ENCODE measurements at regions of chr17 and their contacts with region 1.

Region 1: DNA sequence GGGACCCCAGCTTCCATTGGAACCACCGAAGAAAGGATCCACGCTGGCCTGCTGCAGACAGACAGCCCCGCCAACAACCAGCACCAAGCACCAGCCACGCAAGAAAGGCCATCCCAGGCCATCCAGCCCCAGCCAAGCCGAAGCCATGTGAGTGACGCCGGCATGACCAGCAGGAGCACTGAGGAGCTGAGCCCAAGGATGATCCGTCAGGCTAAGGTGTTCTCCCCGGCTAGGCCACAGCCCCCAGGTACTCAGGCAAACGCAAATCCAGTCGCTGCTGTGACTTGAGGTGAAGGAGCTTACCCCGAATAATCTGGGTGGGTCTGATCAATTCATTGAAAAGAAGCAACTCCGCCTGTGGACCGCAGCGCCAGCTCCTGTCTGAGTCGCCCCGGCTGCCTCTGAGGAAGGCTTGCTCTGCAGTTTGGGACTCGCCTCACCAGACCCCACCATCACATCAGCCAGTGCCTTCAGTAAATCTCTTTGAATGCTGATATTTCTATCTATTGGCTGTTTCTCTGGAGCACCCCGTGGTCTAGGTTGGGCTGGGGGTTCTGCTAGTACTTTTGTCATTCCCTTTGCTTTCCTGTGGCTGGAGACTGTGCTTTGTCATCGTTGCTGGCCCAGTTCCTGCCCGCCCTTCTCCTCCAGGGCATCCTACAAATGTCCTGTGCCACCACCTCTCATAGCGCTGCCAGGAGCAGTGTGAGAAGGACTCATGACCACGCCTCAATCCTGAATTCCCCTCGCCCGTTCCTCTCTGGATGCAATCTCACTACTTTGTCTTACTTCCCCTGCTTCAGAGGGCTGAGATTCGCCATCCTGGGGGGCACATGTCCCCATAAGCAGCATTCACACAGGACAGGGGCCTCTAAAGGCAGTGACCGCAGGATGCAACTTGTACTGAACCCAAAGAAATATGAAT is 8.1 kb upstream of the CBX2 start:
- DNase-seq: peak; percentile 80 to 83
- H3K4me3 ChIP-seq: peak overlapping the region; percentile 95
- H3K27ac ChIP-seq: peak overlapping the region; percentile 97
- H3K4me1 ChIP-seq: peaks cover 5% of the 10 kb centered on the region
- H3K27me3 ChIP-seq: no peaks in the 10 kb centered on the region
- CTCF ChIP-seq: no peak; the same call in 1 of the 2 replicates

Region 2: GRCh38 chr17:79747508-79748295 is 22.2 kb before region 1 on chr17:
- CTCF ChIA-PET with region 1: interaction called, 3 read pairs
- POLR2A ChIA-PET with region 1: no interaction called
- intact Hi-C with region 1: loop called (anchors 2 kb)
- DNase-seq: no peak
- H3K4me3 ChIP-seq: no peak overlapping the region
- H3K27ac ChIP-seq: no peak overlapping the region
- H3K4me1 ChIP-seq: peaks cover 32% of the 10 kb centered on the region
- H3K27me3 ChIP-seq: no peaks in the 10 kb centered on the region
- CTCF ChIP-seq: no peak

Region 3: GRCh38 chr17:79785900-79786810 is 16.3 kb after region 1 on chr17:
- CTCF ChIA-PET with region 1: no interaction called
- POLR2A ChIA-PET with region 1: interaction called, 18 read pairs
- intact Hi-C with region 1: no loop called
- DNase-seq: no peak
- H3K4me3 ChIP-seq: no peak overlapping the region
- H3K27ac ChIP-seq: no peak overlapping the region
- H3K4me1 ChIP-seq: no peaks in the 10 kb centered on the region
- H3K27me3 ChIP-seq: no peaks in the 10 kb centered on the region
- CTCF ChIP-seq: no peak

Region 4: GRCh38 chr17:79850571-79851461 is 81.0 kb after region 1 on chr17:
- CTCF ChIA-PET with region 1: no interaction called
- POLR2A ChIA-PET with region 1: interaction called, 25 read pairs
- intact Hi-C with region 1: no loop called
- DNase-seq: peak; percentile 79 to 92
- H3K4me3 ChIP-seq: no peak overlapping the region
- H3K27ac ChIP-seq: peak overlapping the region; percentile 59
- H3K4me1 ChIP-seq: peaks cover 20% of the 10 kb centered on the region
- H3K27me3 ChIP-seq: no peaks in the 10 kb centered on the region
- CTCF ChIP-seq: no peak